WTC11 (cell line): ENCODE measurements at regions of chr7 and their contacts with region 1.

Region 1: GRCh38 chr7:44973610-44974401 is 5.0 kb downstream of the MYO1G start:
- DNase-seq: peak; percentile 55
- ATAC-seq: peak; percentile 64
- H3K4me3 Mint-ChIP-seq: no peak overlapping the region
- H3K27ac Mint-ChIP-seq: no peak overlapping the region
- H3K4me1 Mint-ChIP-seq: no peaks in the 10 kb centered on the region
- H3K27me3 Mint-ChIP-seq: no peaks in the 10 kb centered on the region; the same call in 1 of the 2 replicates
- CTCF ChIP-seq: 0 out of 2 replicates have a peak, but pooled peaks have one; percentile 28

Region 2: GRCh38 chr7:44914992-44915607 is 58.7 kb before region 1 on chr7:
- CTCF ChIA-PET with region 1: no interaction called
- POLR2A ChIA-PET with region 1: no interaction called
- DNase-seq: no peak
- ATAC-seq: no peak
- H3K4me3 Mint-ChIP-seq: no peak overlapping the region
- H3K27ac Mint-ChIP-seq: no peak overlapping the region
- H3K4me1 Mint-ChIP-seq: peaks cover 9% of the 10 kb centered on the region
- H3K27me3 Mint-ChIP-seq: no peaks in the 10 kb centered on the region; the same call in 1 of the 2 replicates
- CTCF ChIP-seq: no peak

Region 3: GRCh38 chr7:44962483-44963251 is 11.1 kb before region 1 on chr7:
- CTCF ChIA-PET with region 1: interaction called, 38 read pairs
- POLR2A ChIA-PET with region 1: interaction called, 3 read pairs
- DNase-seq: peak; percentile 61
- ATAC-seq: peak; percentile 49
- H3K4me3 Mint-ChIP-seq: peak overlapping the region; percentile 34; the same call in 1 of the 2 replicates
- H3K27ac Mint-ChIP-seq: no peak overlapping the region
- H3K4me1 Mint-ChIP-seq: no peaks in the 10 kb centered on the region
- H3K27me3 Mint-ChIP-seq: peaks cover 35% of the 10 kb centered on the region
- CTCF ChIP-seq: no peak

Region 4: GRCh38 chr7:45073786-45074527 is 100.2 kb after region 1 on chr7:
- CTCF ChIA-PET with region 1: interaction called, 35 read pairs
- POLR2A ChIA-PET with region 1: no interaction called
- DNase-seq: no peak
- ATAC-seq: no peak
- H3K4me3 Mint-ChIP-seq: no peak overlapping the region
- H3K27ac Mint-ChIP-seq: peak overlapping the region; percentile 36; the same call in 1 of the 2 replicates
- H3K4me1 Mint-ChIP-seq: no peaks in the 10 kb centered on the region
- H3K27me3 Mint-ChIP-seq: no peaks in the 10 kb centered on the region
- CTCF ChIP-seq: no peak

Region 5: DNA sequence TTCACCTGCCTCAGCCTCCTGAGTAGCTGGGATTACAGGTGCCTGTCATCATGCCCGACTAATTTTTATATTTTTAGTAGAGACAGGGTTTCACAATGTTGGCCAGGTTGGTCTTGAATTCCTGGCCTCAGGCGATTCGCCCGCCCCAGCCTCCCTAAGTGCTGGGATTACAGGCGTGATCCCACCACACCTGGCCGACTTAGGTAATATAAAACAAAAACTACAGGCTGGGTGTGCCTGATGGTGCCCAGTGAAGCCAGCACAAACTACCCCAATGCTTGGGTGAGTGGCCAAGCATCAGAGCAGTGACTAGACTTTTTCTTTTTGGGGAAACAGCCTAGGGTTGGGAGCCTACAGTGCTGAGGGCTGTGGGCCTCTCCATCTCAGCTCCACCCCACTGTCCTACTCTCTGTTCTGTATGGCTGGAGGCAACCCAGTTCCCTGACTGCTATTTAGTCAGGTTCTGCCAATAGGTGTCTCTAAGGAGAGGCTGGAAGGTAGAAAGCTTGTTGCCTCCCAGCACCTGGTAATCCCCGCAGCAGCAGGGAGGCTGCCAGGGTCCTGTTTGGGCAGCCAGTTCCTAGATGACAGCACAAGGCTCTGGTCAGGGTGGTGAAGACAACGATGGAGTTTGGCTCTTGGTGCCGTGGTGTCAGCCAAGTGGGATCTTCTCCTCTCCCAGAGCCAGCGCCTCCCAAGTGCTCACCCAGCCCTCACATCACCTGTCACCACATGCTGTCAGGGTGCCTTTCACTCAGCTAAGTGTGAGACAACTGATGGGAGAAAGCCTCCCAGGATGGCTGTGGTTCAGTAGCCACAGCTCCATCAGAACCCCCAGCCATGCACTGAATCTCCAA is 125.4 kb after region 1 on chr7:
- CTCF ChIA-PET with region 1: interaction called, 13 read pairs
- POLR2A ChIA-PET with region 1: no interaction called
- DNase-seq: no peak
- ATAC-seq: peak; percentile 75
- H3K4me3 Mint-ChIP-seq: no peak overlapping the region
- H3K27ac Mint-ChIP-seq: no peak overlapping the region
- H3K4me1 Mint-ChIP-seq: no peaks in the 10 kb centered on the region
- H3K27me3 Mint-ChIP-seq: no peaks in the 10 kb centered on the region
- CTCF ChIP-seq: no peak

Region 6: DNA sequence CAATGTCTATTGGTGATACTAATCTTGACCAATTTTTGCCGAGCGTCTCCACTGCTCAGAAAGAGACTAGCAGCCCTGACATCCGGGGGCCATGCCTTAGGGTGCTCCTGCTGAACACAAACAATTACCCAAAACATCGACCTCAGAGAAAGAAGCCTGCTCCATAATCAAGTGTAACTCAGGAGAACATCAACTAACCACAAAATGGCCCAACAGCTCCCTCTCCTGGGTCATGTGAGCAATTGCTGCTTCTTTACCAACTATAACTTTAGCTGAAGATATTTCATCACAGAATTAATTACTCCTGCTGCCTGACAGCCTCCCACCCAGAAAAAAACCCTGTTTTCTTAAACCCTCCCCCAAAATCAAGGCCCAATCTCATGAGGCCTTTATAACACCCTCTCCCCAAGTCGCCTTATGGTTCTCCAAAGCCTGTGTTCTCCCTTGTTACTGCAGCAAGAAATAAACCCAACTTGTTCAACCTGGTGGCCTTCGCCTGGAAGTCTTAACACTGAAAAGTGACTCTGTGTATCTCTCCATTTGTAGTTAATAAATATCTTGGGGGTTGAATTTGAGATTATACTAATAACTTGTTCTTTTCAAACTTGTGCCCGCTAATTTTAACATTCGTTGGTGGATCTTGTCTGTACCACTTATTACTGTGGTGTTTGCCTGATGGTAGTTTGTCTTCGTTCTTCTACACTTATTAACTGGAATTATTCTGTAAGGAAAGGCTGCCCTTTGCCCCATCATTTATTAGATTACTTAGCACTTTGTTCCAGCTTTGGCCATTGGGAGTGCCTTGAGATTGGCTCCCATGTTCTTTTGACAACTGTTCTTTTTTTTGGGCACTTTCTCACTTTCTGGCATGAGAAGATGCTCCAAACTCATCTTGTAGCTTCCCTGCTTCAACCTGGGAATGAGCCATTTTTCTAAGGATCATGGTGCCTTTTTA is 162.6 kb after region 1 on chr7:
- CTCF ChIA-PET with region 1: interaction called, 139 read pairs
- POLR2A ChIA-PET with region 1: no interaction called
- DNase-seq: peak; percentile 52
- ATAC-seq: peak; percentile 80
- H3K4me3 Mint-ChIP-seq: no peak overlapping the region
- H3K27ac Mint-ChIP-seq: no peak overlapping the region
- H3K4me1 Mint-ChIP-seq: peaks cover 4% of the 10 kb centered on the region
- H3K27me3 Mint-ChIP-seq: no peaks in the 10 kb centered on the region; the same call in 1 of the 2 replicates
- CTCF ChIP-seq: peak; percentile 75